Caco-2 (cell line): ENCODE measurements at regions of chr17 and their contacts with region 1.

Region 1: DNA sequence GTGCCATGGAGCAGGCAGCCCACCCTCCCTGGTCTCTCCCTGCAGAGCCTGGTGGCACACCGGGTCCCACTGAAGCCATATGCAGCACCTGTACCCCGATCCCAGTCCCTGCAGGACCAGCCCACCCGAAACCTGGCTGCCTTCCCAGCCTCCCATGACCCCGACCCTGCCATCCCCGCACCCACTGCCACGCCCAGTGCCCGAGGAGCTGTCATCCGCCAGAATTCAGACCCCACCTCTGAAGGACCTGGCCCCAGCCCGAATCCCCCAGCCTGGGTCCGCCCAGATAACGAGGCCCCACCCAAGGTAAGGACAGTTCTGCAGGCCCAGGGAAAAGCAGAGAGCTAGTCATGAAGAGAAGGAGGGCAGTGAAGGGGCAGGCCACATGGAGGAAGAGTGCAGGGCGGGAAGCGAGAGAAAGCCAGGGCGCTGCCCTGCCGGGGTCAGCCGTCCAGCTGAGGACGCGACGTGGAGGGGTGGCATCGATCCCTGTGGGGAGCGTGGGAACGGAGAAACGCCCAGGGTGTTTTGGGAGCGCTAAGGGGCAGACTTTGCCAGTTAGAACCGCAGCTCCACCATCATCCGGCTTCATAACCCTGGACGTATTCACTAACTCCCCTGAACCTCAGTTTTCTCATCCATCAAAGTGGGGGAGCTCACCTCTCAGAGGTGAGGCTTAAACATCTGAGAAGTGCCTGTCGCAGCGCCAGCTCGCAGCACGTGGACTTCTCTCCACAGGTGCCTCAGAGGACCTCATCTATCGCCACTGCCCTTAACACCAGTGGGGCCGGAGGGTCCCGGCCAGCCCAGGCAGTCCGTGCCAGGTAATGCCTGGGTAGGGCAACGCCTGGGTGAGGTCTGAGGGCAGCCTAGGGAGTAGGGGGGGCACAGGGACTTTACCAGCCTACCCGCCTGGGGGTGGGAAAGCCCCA is 7.7 kb upstream of the C17orf107 start:
- DNase-seq: no peak
- H3K4me3 ChIP-seq: no peak overlapping the region
- H3K4me3 Mint-ChIP-seq: no peak overlapping the region
- H3K27ac Mint-ChIP-seq: no peak overlapping the region
- H3K4me1 ChIP-seq: no peaks in the 10 kb centered on the region
- H3K4me1 Mint-ChIP-seq: no peaks in the 10 kb centered on the region
- H3K27me3 ChIP-seq: no peaks in the 10 kb centered on the region
- H3K27me3 Mint-ChIP-seq: no peaks in the 10 kb centered on the region
- CTCF ChIP-seq: no peak

Region 2: DNA sequence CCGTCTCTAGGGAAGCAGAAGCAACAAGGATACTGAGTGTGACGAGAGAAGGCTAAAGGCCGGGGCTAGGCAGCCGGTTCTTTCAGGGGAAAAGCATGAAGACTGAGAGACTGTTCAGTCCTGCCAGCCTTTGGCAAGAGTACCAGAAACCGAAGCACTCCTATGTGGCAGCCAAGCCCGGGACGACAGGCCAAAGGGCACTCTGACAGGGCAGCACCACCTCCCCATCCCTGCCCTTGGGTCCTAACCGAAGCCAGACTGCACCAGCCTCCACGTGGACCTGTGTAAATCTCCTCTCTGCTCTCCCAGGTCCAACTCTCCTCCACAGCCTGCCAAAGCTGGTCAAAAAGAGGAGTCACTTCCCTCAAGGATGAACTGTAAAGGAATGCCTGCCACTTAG is 226.7 kb before region 1 on chr17:
- CTCF ChIA-PET with region 1: no interaction called
- POLR2A ChIA-PET with region 1: no interaction called
- intact Hi-C with region 1: no loop called
- DNase-seq: no peak
- H3K4me3 ChIP-seq: no peak overlapping the region
- H3K4me3 Mint-ChIP-seq: no peak overlapping the region
- H3K27ac Mint-ChIP-seq: no peak overlapping the region
- H3K4me1 ChIP-seq: no peaks in the 10 kb centered on the region
- H3K4me1 Mint-ChIP-seq: no peaks in the 10 kb centered on the region
- H3K27me3 ChIP-seq: no peaks in the 10 kb centered on the region
- H3K27me3 Mint-ChIP-seq: no peaks in the 10 kb centered on the region
- CTCF ChIP-seq: no peak

Region 3: GRCh38 chr17:4709794-4710692 is 181.6 kb before region 1 on chr17 and contains the start of gene ARRB2:
- CTCF ChIA-PET with region 1: no interaction called
- POLR2A ChIA-PET with region 1: no interaction called
- intact Hi-C with region 1: loop called (anchors 1 kb)
- DNase-seq: peak; percentile 95 to 96
- H3K4me3 ChIP-seq: peak within 1 kb of the TSS; percentile 66
- H3K4me3 Mint-ChIP-seq: peak within 1 kb of the TSS; percentile 84
- H3K27ac Mint-ChIP-seq: peak within 1 kb of the TSS; percentile 83
- H3K4me1 ChIP-seq: no peaks in the 10 kb centered on the region; the same call in 1 of the 2 replicates
- H3K4me1 Mint-ChIP-seq: peaks cover 6% of the 10 kb centered on the region
- H3K27me3 ChIP-seq: no peaks in the 10 kb centered on the region
- H3K27me3 Mint-ChIP-seq: no peaks in the 10 kb centered on the region
- CTCF ChIP-seq: peak in 1 of 2 experiments; percentile 45
- total RNA-seq, gene ARRB2: 37.1 and 37.8 TPM in 2 replicates

Region 4: DNA sequence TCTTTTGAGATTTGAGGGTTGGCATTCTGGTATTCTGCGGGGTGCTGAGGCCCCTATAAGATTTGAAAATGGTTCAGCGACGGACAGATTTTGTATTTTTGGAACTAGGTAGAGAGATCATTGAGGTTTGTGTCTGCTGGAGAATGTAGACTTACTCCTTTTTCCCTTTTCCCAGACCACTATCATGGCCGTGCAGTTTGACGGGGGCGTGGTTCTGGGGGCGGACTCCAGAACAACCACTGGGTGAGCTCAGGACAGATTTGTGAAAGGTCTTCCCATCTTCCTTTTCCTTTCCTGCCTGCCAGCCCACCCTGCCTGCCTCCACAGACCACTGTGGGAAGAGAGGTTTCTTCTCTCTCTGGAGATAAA is 95.1 kb before region 1 on chr17:
- CTCF ChIA-PET with region 1: no interaction called
- POLR2A ChIA-PET with region 1: no interaction called
- intact Hi-C with region 1: loop called (anchors 1 kb)
- DNase-seq: peak in 1 of 2 experiments; percentile 49
- H3K4me3 ChIP-seq: peak overlapping the region; percentile 82
- H3K4me3 Mint-ChIP-seq: peak overlapping the region; percentile 98
- H3K27ac Mint-ChIP-seq: peak overlapping the region; percentile 95
- H3K4me1 ChIP-seq: no peaks in the 10 kb centered on the region
- H3K4me1 Mint-ChIP-seq: peaks cover 7% of the 10 kb centered on the region
- H3K27me3 ChIP-seq: no peaks in the 10 kb centered on the region
- H3K27me3 Mint-ChIP-seq: no peaks in the 10 kb centered on the region
- CTCF ChIP-seq: no peak